ENCODE measurements at regions of chr10 and their contacts with region 1.

Region 1: GRCh38 chr10:68406815-68407548 is at the start of gene RUFY2:
- DNase-seq: peak; percentile 56 to 89 (median 76)
- ATAC-seq: peak; percentile 92
- H3K4me3 ChIP-seq: peak within 1 kb of the TSS; percentile 95 to 99
- H3K4me3 Mint-ChIP-seq: peak within 1 kb of the TSS; percentile 92
- H3K27ac ChIP-seq: peak within 1 kb of the TSS; percentile 69 to 78
- H3K27ac Mint-ChIP-seq: peak within 1 kb of the TSS; percentile 82
- H3K4me1 ChIP-seq: peaks cover 10% of the 10 kb centered on the region
- H3K4me1 Mint-ChIP-seq: peaks cover 19% of the 10 kb centered on the region
- H3K27me3 ChIP-seq: no peaks in the 10 kb centered on the region
- H3K27me3 Mint-ChIP-seq: no peaks in the 10 kb centered on the region
- CTCF ChIP-seq: peak; percentile 81
- total RNA-seq, gene RUFY2: 11.7 to 13.7 TPM

Region 2: GRCh38 chr10:67955614-67956013 is 451.4 kb before region 1 on chr10:
- CTCF ChIA-PET with region 1: no interaction called
- POLR2A ChIA-PET with region 1: no interaction called
- intact Hi-C with region 1: no loop called
- DNase-seq: no peak
- ATAC-seq: no peak
- H3K4me3 ChIP-seq: no peak overlapping the region
- H3K4me3 Mint-ChIP-seq: no peak overlapping the region
- H3K27ac ChIP-seq: no peak overlapping the region
- H3K27ac Mint-ChIP-seq: no peak overlapping the region
- H3K4me1 ChIP-seq: no peaks in the 10 kb centered on the region
- H3K4me1 Mint-ChIP-seq: no peaks in the 10 kb centered on the region
- H3K27me3 ChIP-seq: no peaks in the 10 kb centered on the region
- H3K27me3 Mint-ChIP-seq: no peaks in the 10 kb centered on the region
- CTCF ChIP-seq: no peak

Region 3: GRCh38 chr10:68208424-68209042 is 198.4 kb before region 1 on chr10:
- CTCF ChIA-PET with region 1: no interaction called
- POLR2A ChIA-PET with region 1: no interaction called
- intact Hi-C with region 1: no loop called
- DNase-seq: peak in 2 of 9 experiments; percentile 6 to 20
- ATAC-seq: no peak
- H3K4me3 ChIP-seq: no peak overlapping the region
- H3K4me3 Mint-ChIP-seq: no peak overlapping the region
- H3K27ac ChIP-seq: no peak overlapping the region
- H3K27ac Mint-ChIP-seq: no peak overlapping the region
- H3K4me1 ChIP-seq: no peaks in the 10 kb centered on the region
- H3K4me1 Mint-ChIP-seq: no peaks in the 10 kb centered on the region
- H3K27me3 ChIP-seq: no peaks in the 10 kb centered on the region
- H3K27me3 Mint-ChIP-seq: peaks cover 22% of the 10 kb centered on the region
- CTCF ChIP-seq: no peak

Region 4: DNA sequence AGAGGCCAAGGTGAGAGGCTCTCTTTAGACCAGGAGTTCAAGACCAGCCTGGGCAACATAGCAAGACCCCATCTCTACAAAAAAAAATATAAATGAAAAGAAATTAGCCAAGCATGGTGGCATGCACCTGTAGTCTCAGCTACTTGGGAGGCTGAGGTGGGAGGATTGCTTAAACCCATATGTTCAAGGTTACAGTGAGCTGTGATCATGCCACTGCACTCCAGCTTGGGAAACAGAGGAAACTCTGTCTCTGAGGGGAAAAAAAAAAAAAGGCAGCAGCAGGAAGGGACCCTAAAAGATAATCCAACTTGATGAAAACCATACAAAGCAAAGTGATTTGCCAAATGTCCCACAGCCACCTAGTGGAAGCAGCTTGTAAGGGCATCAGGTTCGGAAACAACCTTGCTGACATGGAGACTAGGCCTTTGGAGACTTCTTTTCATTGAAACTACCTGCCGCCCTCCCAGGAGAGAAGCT is 58.7 kb before region 1 on chr10:
- CTCF ChIA-PET with region 1: interaction called, 5 read pairs
- POLR2A ChIA-PET with region 1: no interaction called
- intact Hi-C with region 1: loop called in 1 of 2 experiments (anchors 5 kb)
- DNase-seq: peak in 8 of 9 experiments; percentile 6 to 76 (median 46)
- ATAC-seq: peak; percentile 90
- H3K4me3 ChIP-seq: no peak overlapping the region
- H3K4me3 Mint-ChIP-seq: no peak overlapping the region
- H3K27ac ChIP-seq: peak overlapping the region in 1 of 2 experiments; percentile 33
- H3K27ac Mint-ChIP-seq: peak overlapping the region; percentile 76
- H3K4me1 ChIP-seq: no peaks in the 10 kb centered on the region
- H3K4me1 Mint-ChIP-seq: peaks cover 6% of the 10 kb centered on the region
- H3K27me3 ChIP-seq: no peaks in the 10 kb centered on the region
- H3K27me3 Mint-ChIP-seq: no peaks in the 10 kb centered on the region
- CTCF ChIP-seq: peak; percentile 79

Region 5: GRCh38 chr10:68471586-68472408 is 64.8 kb after region 1 on chr10 and contains the start of gene DNA2:
- CTCF ChIA-PET with region 1: no interaction called
- POLR2A ChIA-PET with region 1: no interaction called
- intact Hi-C with region 1: loop called in 1 of 2 experiments (anchors 2 kb)
- DNase-seq: peak; percentile 46 to 85 (median 68)
- ATAC-seq: peak; percentile 81
- H3K4me3 ChIP-seq: peak within 1 kb of the TSS; percentile 72 to 96
- H3K4me3 Mint-ChIP-seq: peak within 1 kb of the TSS; percentile 99
- H3K27ac ChIP-seq: peak within 1 kb of the TSS; percentile 22 to 47
- H3K27ac Mint-ChIP-seq: peak within 1 kb of the TSS; percentile 79
- H3K4me1 ChIP-seq: no peaks in the 10 kb centered on the region
- H3K4me1 Mint-ChIP-seq: peaks cover 23% of the 10 kb centered on the region
- H3K27me3 ChIP-seq: no peaks in the 10 kb centered on the region
- H3K27me3 Mint-ChIP-seq: no peaks in the 10 kb centered on the region
- CTCF ChIP-seq: no peak
- total RNA-seq, gene DNA2: 5.3 to 9.9 TPM

Region 6: DNA sequence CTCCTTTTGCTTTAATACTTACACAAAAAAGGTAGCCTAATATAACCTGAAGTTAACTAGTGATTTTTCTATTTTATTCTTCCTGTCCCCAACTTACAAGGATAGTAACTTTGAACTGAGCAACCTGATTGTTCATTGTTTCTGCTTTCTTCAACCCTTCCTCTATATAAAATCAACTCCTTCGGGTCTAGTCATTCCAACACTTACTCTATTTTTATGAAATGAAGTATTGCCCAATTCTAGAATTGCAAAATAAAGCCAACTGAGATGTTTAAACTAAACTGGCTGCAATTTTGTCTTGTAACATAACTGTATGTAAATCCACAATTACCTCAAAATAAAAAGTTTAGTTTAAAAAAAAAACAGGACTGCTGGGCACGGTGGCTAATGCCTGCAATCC is 85.1 kb after region 1 on chr10:
- CTCF ChIA-PET with region 1: no interaction called
- POLR2A ChIA-PET with region 1: no interaction called
- intact Hi-C with region 1: no loop called
- DNase-seq: no peak
- ATAC-seq: no peak
- H3K4me3 ChIP-seq: no peak overlapping the region
- H3K4me3 Mint-ChIP-seq: no peak overlapping the region
- H3K27ac ChIP-seq: no peak overlapping the region
- H3K27ac Mint-ChIP-seq: no peak overlapping the region
- H3K4me1 ChIP-seq: no peaks in the 10 kb centered on the region
- H3K4me1 Mint-ChIP-seq: no peaks in the 10 kb centered on the region
- H3K27me3 ChIP-seq: no peaks in the 10 kb centered on the region
- H3K27me3 Mint-ChIP-seq: no peaks in the 10 kb centered on the region
- CTCF ChIP-seq: no peak

Region 7: GRCh38 chr10:68606918-68607317 is 199.9 kb after region 1 on chr10:
- CTCF ChIA-PET with region 1: no interaction called
- POLR2A ChIA-PET with region 1: no interaction called
- intact Hi-C with region 1: no loop called
- DNase-seq: no peak
- ATAC-seq: no peak
- H3K4me3 ChIP-seq: no peak overlapping the region
- H3K4me3 Mint-ChIP-seq: no peak overlapping the region
- H3K27ac ChIP-seq: no peak overlapping the region
- H3K27ac Mint-ChIP-seq: no peak overlapping the region
- H3K4me1 ChIP-seq: peaks cover 6% of the 10 kb centered on the region
- H3K4me1 Mint-ChIP-seq: peaks cover 19% of the 10 kb centered on the region
- H3K27me3 ChIP-seq: no peaks in the 10 kb centered on the region
- H3K27me3 Mint-ChIP-seq: no peaks in the 10 kb centered on the region
- CTCF ChIP-seq: no peak

Region 8: GRCh38 chr10:68720793-68721672 is 314.1 kb after region 1 on chr10 and contains the start of gene CCAR1:
- CTCF ChIA-PET with region 1: no interaction called
- POLR2A ChIA-PET with region 1: no interaction called
- intact Hi-C with region 1: loop called (anchors 2 to 10 kb)
- DNase-seq: peak; percentile 92 to 99 (median 97)
- ATAC-seq: peak; percentile 95
- H3K4me3 ChIP-seq: peak within 1 kb of the TSS; percentile 87 to 98
- H3K4me3 Mint-ChIP-seq: peak within 1 kb of the TSS; percentile 100
- H3K27ac ChIP-seq: peak within 1 kb of the TSS; percentile 83 to 95
- H3K27ac Mint-ChIP-seq: peak within 1 kb of the TSS; percentile 99
- H3K4me1 ChIP-seq: peaks cover 10% of the 10 kb centered on the region
- H3K4me1 Mint-ChIP-seq: peaks cover 20% of the 10 kb centered on the region
- H3K27me3 ChIP-seq: no peaks in the 10 kb centered on the region
- H3K27me3 Mint-ChIP-seq: no peaks in the 10 kb centered on the region
- CTCF ChIP-seq: no peak
- total RNA-seq, gene CCAR1: 70.8 to 79.1 TPM